BJ (cell line): ENCODE measurements at regions of chr6 and their contacts with region 1.

Region 1: DNA sequence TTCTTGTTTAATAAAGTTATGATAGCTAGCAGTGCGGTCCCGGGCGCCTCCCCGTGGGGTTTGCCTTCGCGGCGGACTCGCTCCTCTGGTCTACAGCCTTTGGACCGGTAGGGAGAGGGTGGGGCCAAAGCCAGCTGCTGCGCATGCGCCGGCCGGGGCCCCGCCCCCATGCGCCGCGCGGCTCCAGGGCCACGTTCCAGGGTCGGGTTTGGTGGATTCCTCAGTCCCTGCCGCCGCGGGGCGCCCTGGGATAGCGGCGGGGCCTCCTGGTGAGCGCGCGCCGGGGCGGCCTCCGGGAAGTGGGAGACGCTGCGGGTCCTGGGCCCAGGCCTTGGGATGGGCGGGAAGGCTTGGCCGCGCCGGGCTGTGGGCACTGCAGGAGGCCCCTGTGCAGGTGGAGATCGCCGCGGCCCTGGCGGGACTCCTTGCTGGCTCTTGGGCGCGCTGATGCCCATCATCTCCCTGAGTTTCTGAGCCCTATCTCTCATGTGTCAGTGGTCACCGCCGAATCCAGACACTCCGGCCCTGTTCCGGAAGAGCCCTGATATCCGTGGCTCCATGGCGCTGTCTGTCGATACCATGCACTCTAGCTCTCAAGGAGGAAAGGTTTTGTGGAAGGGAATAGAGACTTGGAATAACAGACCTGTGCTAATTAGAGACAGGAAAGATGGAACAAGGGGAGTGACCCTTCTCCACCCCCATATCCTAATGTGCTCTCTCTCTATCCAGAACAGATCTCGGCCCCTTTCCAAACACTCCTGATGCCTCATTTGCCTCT is at the start of gene VARS2:
- DNase-seq: peak; percentile 64
- H3K4me3 ChIP-seq: peak within 1 kb of the TSS; percentile 37
- H3K27me3 ChIP-seq: no peaks in the 10 kb centered on the region
- CTCF ChIP-seq: peak; percentile 49
- polyA plus RNA-seq, gene VARS2: 14.8 and 16.1 TPM in 2 replicates

Region 2: DNA sequence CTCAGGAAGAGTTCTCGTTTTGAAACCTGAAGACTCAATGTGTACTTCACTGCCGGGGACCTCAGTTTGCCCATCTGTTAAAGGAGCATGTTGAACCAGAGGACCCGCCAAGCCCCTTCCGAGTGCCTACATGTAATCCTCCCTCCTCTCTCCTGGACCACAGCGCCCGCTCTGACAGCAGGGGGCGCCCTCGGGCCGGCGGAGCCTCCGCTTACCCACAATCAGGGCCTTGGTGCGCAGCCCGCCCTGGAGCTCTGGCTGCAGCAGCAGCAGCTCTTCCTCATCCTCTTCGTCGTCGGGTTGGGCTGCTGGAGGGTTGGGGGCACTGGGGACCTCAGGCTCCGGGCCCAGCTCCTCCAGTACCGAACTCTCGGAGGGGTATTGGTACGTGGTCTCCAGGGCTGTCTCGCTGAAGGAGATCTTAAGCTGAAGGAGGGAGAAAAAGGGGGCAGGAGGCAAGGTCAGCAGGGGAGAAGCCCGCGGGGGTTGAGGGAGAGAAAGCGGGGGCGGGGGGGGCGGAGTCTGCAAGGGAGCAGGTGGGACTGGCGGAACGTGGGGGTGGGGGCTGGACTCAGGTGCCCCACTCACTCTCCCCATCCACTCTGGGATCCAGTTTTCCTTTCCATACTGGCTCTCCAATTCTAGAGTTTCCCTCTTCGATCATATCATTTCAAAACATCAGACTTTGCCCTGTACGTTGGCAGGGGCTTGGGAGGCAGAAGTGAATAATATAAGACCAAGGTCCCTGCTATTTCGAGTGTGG is 235.1 kb before region 1 on chr6:
- CTCF ChIA-PET with region 1: interaction called, 12 read pairs
- POLR2A ChIA-PET with region 1: no interaction called
- DNase-seq: no peak
- H3K4me3 ChIP-seq: no peak overlapping the region; the same call in 1 of the 2 replicates
- H3K27me3 ChIP-seq: no peaks in the 10 kb centered on the region
- CTCF ChIP-seq: peak; percentile 97

Region 3: DNA sequence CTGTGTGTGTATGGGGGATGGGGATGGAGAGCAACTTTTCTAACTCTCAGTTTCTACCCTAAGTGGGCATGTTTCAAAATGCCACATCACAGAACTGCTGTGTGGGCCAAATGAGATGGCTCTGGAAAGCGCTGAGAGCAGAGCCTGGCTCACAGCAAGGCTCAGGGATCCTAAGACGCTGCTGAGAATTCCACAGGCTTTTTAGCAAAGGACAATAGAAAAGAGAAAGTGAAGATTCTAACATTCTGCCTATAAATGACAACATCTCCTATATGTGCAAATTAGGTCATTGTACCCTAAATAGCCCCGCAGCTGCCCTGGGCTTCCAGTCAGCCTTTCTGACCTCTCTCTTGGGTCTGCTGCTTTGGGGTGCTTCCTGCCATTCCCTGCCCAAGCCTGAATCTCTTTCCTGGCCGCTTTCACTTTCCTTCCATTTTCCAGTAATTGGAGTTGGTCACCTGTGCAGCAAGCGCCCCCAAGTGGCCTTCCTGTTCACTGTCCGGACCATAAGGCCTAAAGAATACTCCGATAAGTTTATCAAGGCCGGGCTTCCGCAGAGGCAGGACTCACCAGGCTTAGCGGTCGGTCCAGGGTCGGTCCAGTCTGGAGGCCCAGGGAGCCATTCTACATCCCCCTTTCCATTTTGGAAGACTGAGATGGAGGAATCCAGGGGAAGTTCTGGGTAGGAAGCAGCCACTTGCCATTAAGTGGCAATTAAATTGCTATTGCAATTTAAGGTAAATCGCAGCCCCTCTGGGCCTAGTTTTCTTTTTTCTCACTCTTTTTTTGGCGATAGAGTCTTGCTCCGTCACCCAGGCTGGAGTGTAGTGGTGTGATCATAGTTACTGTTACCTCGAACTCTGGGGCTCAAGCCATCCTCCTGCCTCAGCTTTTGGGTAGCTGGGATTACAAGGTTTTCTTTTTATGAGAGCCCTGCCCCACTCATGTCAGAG is 36.6 kb before region 1 on chr6:
- CTCF ChIA-PET with region 1: interaction called, 37 read pairs
- POLR2A ChIA-PET with region 1: no interaction called
- DNase-seq: peak; percentile 34
- H3K4me3 ChIP-seq: peak overlapping the region; percentile 12; the same call in 1 of the 2 replicates
- H3K27me3 ChIP-seq: no peaks in the 10 kb centered on the region
- CTCF ChIP-seq: peak; percentile 91

Region 4: DNA sequence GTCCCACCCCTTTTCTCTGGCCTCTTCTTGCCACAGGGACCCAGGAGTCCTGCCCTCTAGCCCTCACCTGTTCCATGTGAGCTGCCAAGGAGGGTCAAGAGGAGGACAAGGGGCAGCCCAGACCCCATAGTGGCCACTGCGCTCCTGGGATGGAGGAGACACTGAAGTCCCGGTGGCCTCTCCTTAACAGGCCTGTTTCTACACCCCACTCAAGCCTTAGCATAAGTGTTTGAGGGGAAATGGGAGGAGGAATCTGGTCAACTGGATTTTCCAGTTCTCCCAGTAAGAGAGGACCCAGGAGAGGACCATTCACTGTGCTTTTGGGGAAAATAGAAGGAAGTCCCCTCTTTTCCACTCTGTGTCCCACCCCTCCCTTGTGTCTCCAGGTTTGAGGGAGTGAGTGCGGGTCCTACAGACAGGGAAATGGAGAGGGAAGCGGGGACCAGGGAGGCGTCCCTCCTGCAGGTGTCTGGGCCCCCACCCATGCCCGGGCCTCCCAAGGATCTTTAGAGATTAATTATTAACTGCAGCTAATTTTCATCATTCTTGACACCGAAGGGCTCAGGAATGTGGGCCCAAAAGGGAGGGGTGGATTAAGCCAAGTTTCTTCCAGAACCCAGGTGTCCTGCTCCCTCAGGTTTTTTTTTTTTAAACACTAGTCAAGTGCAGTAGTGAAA is 17.8 kb after region 1 on chr6 and contains the start of gene SFTA2:
- CTCF ChIA-PET with region 1: interaction called, 33 read pairs
- POLR2A ChIA-PET with region 1: no interaction called
- DNase-seq: no peak
- H3K4me3 ChIP-seq: no peak within 1 kb of the TSS
- H3K27me3 ChIP-seq: no peaks in the 10 kb centered on the region; the same call in 1 of the 2 replicates
- CTCF ChIP-seq: no peak
- polyA plus RNA-seq, gene SFTA2: not detected in 2 replicates

Region 5: DNA sequence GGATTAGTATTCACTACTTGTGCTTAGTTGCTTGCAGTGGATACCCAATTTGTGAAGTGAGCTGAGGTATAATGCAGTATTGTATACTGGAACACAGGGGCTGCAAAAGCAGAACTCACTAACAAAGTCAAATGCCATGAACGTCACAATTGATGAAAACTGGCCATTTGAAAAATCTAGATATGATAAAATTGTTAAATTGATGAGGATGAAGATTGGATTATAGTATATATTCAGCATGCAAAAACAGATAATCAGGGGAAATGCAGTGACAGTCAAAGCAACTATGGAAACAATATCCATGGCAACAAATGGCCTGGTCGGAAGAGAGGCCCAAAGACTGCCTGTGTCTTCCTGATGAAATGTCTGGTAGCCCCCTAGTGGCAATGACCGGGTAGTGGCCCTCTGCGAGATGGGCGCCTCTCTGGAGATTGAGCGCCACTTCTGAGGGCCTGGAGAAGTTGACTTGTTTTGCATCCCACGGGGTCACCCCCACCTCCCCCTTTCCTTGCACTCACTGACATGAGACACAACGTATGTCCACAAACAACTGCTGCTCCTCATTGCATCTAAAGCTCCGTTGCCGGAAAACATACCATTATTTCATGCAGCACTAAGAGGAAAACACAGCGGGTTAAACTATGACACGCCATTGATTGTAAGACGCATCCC is 154.5 kb after region 1 on chr6:
- CTCF ChIA-PET with region 1: interaction called, 194 read pairs
- POLR2A ChIA-PET with region 1: interaction called, 4 read pairs
- DNase-seq: no peak
- H3K4me3 ChIP-seq: no peak overlapping the region
- H3K27me3 ChIP-seq: peaks cover 3% of the 10 kb centered on the region; the same call in 1 of the 2 replicates
- CTCF ChIP-seq: peak; percentile 92

Region 6: GRCh38 chr6:31094389-31094881 is 180.2 kb after region 1 on chr6:
- CTCF ChIA-PET with region 1: interaction called, 8 read pairs
- POLR2A ChIA-PET with region 1: interaction called, 15 read pairs
- DNase-seq: no peak
- H3K4me3 ChIP-seq: no peak overlapping the region
- H3K27me3 ChIP-seq: no peaks in the 10 kb centered on the region; the same call in 1 of the 2 replicates
- CTCF ChIP-seq: no peak